CD4-positive, alpha-beta T cell (primary cell): ENCODE measurements at regions of chr6 and their contacts with region 1.

Region 1: DNA sequence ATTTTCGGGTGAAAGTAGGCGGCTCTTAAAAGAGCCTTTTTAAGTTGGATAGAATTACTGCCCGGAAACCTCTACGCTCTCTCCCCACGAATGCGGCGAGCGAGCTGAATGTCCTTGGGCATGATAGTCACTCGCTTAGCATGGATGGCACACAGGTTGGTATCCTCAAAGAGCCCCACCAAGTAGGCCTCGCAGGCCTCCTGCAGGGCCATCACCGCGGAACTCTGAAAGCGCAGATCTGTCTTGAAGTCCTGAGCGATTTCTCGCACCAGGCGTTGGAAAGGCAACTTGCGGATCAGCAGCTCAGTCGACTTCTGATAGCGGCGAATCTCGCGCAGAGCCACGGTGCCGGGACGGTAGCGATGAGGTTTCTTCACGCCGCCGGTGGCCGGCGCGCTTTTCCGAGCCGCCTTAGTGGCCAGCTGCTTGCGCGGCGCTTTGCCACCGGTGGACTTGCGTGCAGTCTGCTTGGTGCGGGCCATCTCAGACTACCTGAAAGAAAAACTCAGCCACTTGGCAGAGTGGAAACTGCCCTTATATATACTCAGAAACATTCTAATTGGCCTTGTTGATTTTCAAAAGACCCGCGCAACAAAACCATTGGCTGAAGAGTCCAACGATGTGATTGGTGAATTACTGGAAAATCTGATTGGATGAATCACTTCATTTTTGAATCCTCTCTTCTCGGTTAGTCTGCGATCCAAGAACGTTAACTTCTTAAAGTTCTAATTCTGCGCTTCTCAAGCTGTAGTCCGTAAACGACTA is 93.9 kb upstream of the BTN3A2 start:
- DNase-seq: peak; percentile 60 to 92 (median 75)
- ATAC-seq: peak; percentile 25
- H3K4me3 ChIP-seq: peak overlapping the region; percentile 59
- H3K4me3 Mint-ChIP-seq: no peak overlapping the region
- H3K27ac ChIP-seq: peak overlapping the region; percentile 82 to 84
- H3K27ac Mint-ChIP-seq: no peak overlapping the region
- H3K4me1 ChIP-seq: peaks cover 28% of the 10 kb centered on the region
- H3K4me1 Mint-ChIP-seq: peaks cover 7% of the 10 kb centered on the region
- H3K27me3 ChIP-seq: no peaks in the 10 kb centered on the region
- H3K27me3 Mint-ChIP-seq: no peaks in the 10 kb centered on the region
- CTCF ChIP-seq: no peak

Region 2: GRCh38 chr6:26031595-26032339 is 239.3 kb before region 1 on chr6:
- CTCF ChIA-PET with region 1: no interaction called
- POLR2A ChIA-PET with region 1: interaction called, 26 read pairs
- intact Hi-C with region 1: loop called in 1 of 2 experiments (anchors 5 kb)
- DNase-seq: peak; percentile 73 to 94 (median 81)
- ATAC-seq: peak; percentile 65
- H3K4me3 ChIP-seq: peak overlapping the region; percentile 64
- H3K4me3 Mint-ChIP-seq: peak overlapping the region; percentile 97
- H3K27ac ChIP-seq: peak overlapping the region; percentile 42 to 72
- H3K27ac Mint-ChIP-seq: peak overlapping the region; percentile 99
- H3K4me1 ChIP-seq: peaks cover 35% of the 10 kb centered on the region
- H3K4me1 Mint-ChIP-seq: peaks cover 46% of the 10 kb centered on the region
- H3K27me3 ChIP-seq: no peaks in the 10 kb centered on the region
- H3K27me3 Mint-ChIP-seq: no peaks in the 10 kb centered on the region
- CTCF ChIP-seq: peak; percentile 22

Region 3: GRCh38 chr6:26175428-26176181 is 95.5 kb before region 1 on chr6:
- CTCF ChIA-PET with region 1: interaction called, 5 read pairs
- POLR2A ChIA-PET with region 1: interaction called, 83 read pairs
- intact Hi-C with region 1: loop called in 1 of 2 experiments (anchors 1 kb)
- DNase-seq: peak in 11 of 14 experiments; percentile 13 to 85 (median 54)
- ATAC-seq: no peak
- H3K4me3 ChIP-seq: no peak overlapping the region
- H3K4me3 Mint-ChIP-seq: peak overlapping the region; percentile 83
- H3K27ac ChIP-seq: peak overlapping the region in 1 of 2 donors; percentile 41
- H3K27ac Mint-ChIP-seq: peak overlapping the region; percentile 93
- H3K4me1 ChIP-seq: peaks cover 17% of the 10 kb centered on the region
- H3K4me1 Mint-ChIP-seq: peaks cover 53% of the 10 kb centered on the region
- H3K27me3 ChIP-seq: no peaks in the 10 kb centered on the region
- H3K27me3 Mint-ChIP-seq: no peaks in the 10 kb centered on the region
- CTCF ChIP-seq: peak; percentile 87

Region 4: DNA sequence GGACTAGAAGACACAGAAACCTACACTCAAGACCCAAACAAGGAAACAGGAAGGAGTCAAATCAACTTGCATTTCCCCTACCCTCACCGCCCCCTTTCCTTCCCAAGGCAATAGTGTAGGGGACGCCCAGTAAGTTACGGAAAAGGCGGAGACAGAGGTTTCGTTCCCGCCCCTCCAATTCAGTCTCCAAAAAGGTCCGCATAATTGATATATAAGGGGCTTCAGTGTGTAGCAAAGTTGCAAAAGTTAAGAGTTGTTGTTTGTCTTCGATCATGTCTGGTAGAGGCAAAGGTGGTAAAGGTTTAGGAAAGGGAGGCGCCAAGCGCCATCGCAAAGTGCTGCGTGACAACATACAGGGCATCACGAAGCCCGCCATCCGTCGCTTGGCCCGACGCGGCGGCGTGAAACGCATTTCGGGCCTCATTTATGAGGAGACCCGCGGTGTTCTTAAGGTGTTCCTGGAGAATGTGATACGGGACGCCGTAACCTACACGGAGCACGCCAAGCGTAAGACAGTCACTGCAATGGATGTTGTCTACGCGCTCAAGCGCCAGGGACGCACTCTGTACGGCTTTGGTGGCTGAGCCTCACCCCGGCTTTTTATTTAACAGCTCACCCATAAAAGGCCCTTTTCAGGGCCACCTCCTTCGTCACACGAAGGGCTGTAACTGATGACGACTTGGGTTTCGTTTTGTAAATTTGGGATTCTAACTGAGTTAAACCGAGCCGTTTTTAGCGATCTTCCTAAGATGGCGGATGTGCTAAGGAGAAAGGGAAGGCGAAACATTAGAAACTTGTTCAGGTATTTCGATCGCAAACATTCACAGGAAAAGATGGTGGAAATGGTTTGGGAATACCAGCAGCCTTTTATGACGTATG is 30.7 kb before region 1 on chr6:
- CTCF ChIA-PET with region 1: interaction called, 10 read pairs
- POLR2A ChIA-PET with region 1: interaction called, 374 read pairs
- intact Hi-C with region 1: loop called in 1 of 2 experiments (anchors 2 kb)
- DNase-seq: peak; percentile 45 to 96 (median 64)
- ATAC-seq: peak; percentile 76
- H3K4me3 ChIP-seq: peak overlapping the region; percentile 66
- H3K4me3 Mint-ChIP-seq: peak overlapping the region; percentile 84
- H3K27ac ChIP-seq: peak overlapping the region; percentile 78 to 90
- H3K27ac Mint-ChIP-seq: peak overlapping the region; percentile 96
- H3K4me1 ChIP-seq: peaks cover 17% of the 10 kb centered on the region
- H3K4me1 Mint-ChIP-seq: peaks cover 23% of the 10 kb centered on the region
- H3K27me3 ChIP-seq: no peaks in the 10 kb centered on the region
- H3K27me3 Mint-ChIP-seq: no peaks in the 10 kb centered on the region
- CTCF ChIP-seq: no peak

Region 5: DNA sequence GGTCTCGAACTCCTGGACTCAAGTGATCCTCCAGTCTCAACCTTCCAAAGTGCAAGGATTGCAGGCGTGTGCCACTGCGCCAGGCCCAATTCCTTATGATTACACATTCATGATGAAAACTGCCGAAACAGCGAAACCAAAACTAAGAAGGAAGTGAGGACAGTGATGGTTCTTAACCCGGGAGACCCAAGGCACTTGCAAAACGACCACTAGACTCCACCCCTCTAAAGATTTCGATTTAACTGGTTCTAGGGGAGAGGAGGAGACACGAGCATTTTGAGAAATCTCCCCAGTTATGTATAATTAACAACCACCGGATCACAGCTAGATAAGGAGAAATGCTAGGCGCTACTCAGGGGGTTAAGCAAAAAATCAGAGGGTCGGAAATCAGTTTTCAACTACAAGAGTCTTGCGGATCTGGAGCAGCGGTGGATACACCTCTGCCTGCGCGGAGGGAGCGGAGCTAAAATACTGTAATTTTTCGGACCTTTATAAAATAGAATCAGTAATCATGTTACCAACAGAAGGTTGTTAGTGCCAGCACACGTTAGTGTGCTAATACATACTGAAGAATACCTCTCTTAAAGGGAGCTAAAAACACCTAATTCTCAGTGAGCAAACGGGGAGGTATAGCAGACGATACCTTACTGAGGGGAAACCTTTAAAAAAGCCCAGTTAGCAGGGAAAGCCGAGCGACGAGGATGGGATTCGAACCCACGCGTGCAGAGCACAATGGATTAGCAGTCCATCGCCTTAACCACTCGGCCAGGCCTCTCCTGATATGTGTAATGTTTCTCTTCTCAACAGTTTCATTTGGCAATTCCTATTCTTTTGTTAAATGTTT is 33.9 kb after region 1 on chr6:
- CTCF ChIA-PET with region 1: interaction called, 3 read pairs
- POLR2A ChIA-PET with region 1: interaction called, 36 read pairs
- intact Hi-C with region 1: no loop called
- DNase-seq: peak in 12 of 14 experiments; percentile 48 to 90 (median 62)
- ATAC-seq: peak; percentile 73
- H3K4me3 ChIP-seq: peak overlapping the region; percentile 60
- H3K4me3 Mint-ChIP-seq: peak overlapping the region; percentile 93
- H3K27ac ChIP-seq: peak overlapping the region in 1 of 2 donors; percentile 26
- H3K27ac Mint-ChIP-seq: peak overlapping the region; percentile 93
- H3K4me1 ChIP-seq: peaks cover 5% of the 10 kb centered on the region
- H3K4me1 Mint-ChIP-seq: peaks cover 33% of the 10 kb centered on the region
- H3K27me3 ChIP-seq: no peaks in the 10 kb centered on the region
- H3K27me3 Mint-ChIP-seq: peaks cover 12% of the 10 kb centered on the region
- CTCF ChIP-seq: no peak

Region 6: GRCh38 chr6:26537846-26538571 is 266.9 kb after region 1 on chr6 and contains the start of gene HMGN4:
- CTCF ChIA-PET with region 1: no interaction called
- POLR2A ChIA-PET with region 1: interaction called, 31 read pairs
- intact Hi-C with region 1: no loop called
- DNase-seq: peak; percentile 66 to 97 (median 76)
- ATAC-seq: peak; percentile 70
- H3K4me3 ChIP-seq: peak within 1 kb of the TSS; percentile 93
- H3K4me3 Mint-ChIP-seq: peak within 1 kb of the TSS; percentile 94
- H3K27ac ChIP-seq: peak within 1 kb of the TSS; percentile 84 to 91
- H3K27ac Mint-ChIP-seq: peak within 1 kb of the TSS; percentile 98
- H3K4me1 ChIP-seq: peaks cover 51% of the 10 kb centered on the region
- H3K4me1 Mint-ChIP-seq: peaks cover 57% of the 10 kb centered on the region
- H3K27me3 ChIP-seq: no peaks in the 10 kb centered on the region
- H3K27me3 Mint-ChIP-seq: peaks cover 13% of the 10 kb centered on the region
- CTCF ChIP-seq: no peak
- total RNA-seq, gene HMGN4: 22.7 to 24.8 TPM

Region 7: DNA sequence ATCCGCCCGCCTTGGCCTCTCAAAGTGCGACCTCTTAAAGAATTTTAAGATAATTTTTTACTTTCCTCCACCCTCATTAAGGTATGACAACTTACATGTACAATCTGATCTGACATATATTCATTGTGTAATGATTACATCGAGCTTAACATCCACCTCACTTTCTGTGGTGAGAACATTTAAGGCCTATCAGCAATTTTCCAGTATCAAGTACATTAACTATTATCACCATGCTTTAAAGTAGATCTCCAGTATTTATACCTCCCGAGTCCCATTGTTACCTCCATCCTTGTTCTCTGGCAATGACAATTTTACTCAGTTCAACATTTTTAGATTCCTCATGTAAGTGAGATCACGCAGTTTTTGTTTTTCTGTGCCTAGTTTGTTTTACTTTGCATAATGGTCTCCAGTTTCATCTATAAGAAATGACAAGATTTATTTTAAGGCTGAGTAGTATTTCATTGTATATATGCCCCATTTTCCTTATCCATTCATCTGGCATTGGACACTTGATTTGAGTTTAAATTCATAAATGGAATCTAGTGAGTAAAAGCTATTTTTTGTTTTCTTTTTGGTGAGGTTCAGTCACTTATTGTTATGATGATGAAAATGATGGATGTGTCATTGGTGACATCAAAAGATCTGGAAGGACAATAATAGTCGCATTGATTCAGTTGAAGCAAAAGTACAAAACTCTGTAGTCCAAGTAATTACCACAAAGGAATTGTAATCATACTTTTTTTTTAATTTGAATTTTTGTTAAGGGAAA is 1554.1 kb after region 1 on chr6:
- CTCF ChIA-PET with region 1: no interaction called
- POLR2A ChIA-PET with region 1: interaction called, 10 read pairs
- intact Hi-C with region 1: no loop called
- DNase-seq: peak in 2 of 14 experiments; percentile 27 to 38
- ATAC-seq: no peak
- H3K4me3 ChIP-seq: peak overlapping the region; percentile 82
- H3K4me3 Mint-ChIP-seq: peak overlapping the region; percentile 90
- H3K27ac ChIP-seq: peak overlapping the region; percentile 77 to 87
- H3K27ac Mint-ChIP-seq: peak overlapping the region; percentile 99
- H3K4me1 ChIP-seq: peaks cover 8% of the 10 kb centered on the region
- H3K4me1 Mint-ChIP-seq: peaks cover 38% of the 10 kb centered on the region
- H3K27me3 ChIP-seq: no peaks in the 10 kb centered on the region
- H3K27me3 Mint-ChIP-seq: no peaks in the 10 kb centered on the region
- CTCF ChIP-seq: no peak